Vagina (tissue), 2 donors: ENCODE measurements at regions of chr7 and their contacts with region 1.

Region 1: DNA sequence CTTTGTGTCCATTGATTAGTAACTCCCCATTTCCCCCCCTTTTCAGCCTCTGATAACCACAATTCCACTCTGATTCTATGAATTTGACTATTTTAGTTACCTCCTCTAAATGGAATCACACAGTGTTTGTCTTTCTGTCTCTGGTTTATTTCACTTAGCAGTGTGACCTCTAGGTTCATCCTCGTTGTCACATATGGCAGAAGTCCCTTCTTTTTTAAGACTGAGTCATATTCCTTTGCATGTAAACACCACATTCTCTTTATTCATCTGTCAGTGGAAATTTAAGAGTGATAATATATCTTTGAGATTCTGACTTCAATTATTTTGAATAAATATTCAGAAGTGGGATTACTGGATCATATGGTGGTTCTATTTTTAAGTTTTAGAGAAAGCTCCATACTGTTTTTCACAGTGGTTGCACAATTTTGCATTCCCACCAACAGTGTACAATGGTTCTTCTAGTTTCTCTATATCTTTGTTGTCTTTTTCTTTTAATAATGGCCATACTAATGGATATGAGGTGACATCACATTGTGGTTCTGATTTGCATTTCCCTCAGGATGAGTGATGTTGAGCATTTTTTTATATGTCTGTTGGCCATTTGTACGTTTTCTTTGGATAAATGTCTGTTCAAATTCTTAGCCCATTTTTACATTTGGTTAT is 126.1 kb upstream of the GRB10 start:
- DNase-seq: no peak
- H3K4me3 ChIP-seq: no peak overlapping the region
- H3K27ac ChIP-seq: no peak overlapping the region
- H3K4me1 ChIP-seq: no peaks in the 10 kb centered on the region
- H3K27me3 ChIP-seq: no peaks in the 10 kb centered on the region
- CTCF ChIP-seq: no peak
- POLR2A ChIP-seq: no peak

Region 2: GRCh38 chr7:50921114-50921813 is 12.5 kb after region 1 on chr7:
- intact Hi-C with region 1: loop called (anchors 1 kb)
- DNase-seq: no peak
- H3K4me3 ChIP-seq: no peak overlapping the region
- H3K27ac ChIP-seq: no peak overlapping the region
- H3K4me1 ChIP-seq: peaks cover 4% of the 10 kb centered on the region
- H3K27me3 ChIP-seq: no peaks in the 10 kb centered on the region
- CTCF ChIP-seq: no peak
- POLR2A ChIP-seq: no peak